Endothelial cell of umbilical vein (primary cell): ENCODE measurements at regions of chr10 and their contacts with region 1.

Region 1: GRCh38 chr10:68837608-68838322 is 10.4 kb downstream of the STOX1 start:
- DNase-seq: no peak
- H3K4me3 ChIP-seq: no peak overlapping the region
- H3K27ac ChIP-seq: no peak overlapping the region
- H3K4me1 ChIP-seq: no peaks in the 10 kb centered on the region
- H3K27me3 ChIP-seq: peaks cover 0 to 2% of the 10 kb centered on the region in 2 experiments
- CTCF ChIP-seq: no peak
- POLR2A ChIP-seq: no peak

Region 2: DNA sequence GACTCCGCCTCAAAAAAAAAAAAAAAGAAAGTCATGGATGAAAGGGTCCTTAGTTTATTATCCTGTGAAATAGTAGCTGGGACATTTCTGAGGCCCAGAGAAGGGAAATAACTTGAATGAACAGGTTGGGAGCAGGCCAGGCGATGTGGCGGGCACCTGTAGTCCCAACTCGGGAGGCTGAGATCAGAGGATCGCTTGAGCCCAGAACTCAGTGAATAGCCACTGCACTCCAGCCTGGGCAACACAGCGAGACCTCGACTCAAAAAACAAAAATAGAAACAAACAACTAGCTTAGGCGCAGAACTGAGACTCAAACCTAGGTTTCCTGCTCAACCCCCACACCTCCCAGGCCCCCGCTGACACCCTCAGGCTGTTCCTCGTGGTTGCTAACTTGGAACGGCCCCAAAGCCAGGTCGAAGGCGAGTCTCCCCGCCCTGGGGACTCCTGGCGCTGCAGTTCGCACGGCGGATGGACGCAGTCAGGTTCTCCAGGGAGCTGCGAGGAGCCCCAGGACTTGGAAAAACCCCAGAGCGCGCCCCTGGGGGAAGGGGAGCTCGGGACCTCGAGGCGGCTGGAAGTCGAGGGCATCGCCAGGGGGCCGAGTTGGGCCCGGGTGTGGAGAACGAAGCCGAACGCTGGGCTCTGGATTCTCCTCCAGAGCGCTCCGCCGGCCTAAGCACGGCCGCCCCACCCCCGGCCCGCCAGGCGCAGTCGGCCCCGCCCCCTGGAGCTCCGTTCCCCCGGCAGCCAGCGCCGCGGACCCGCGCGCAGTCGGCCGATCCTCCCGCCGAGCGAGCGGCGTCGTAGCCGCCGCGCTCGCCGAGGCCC is 10.8 kb before region 1 on chr10 and contains the start of gene STOX1:
- CTCF ChIA-PET with region 1: interaction called, 13 read pairs
- POLR2A ChIA-PET with region 1: no interaction called
- dilution Hi-C with region 1: no loop called
- intact Hi-C with region 1: no loop called
- DNase-seq: peak; percentile 60
- H3K4me3 ChIP-seq: peak within 1 kb of the TSS; percentile 46 to 82 (median 72)
- H3K27ac ChIP-seq: no peak within 1 kb of the TSS
- H3K4me1 ChIP-seq: peaks cover 6% of the 10 kb centered on the region
- H3K27me3 ChIP-seq: peaks cover 8 to 12% of the 10 kb centered on the region in 2 experiments
- CTCF ChIP-seq: no peak
- POLR2A ChIP-seq: no peak
- total RNA-seq, gene STOX1: 0.20 and 0.48 TPM in 2 replicates